Ovary (tissue), 10 donors: ENCODE measurements at regions of chrX and their contacts with region 1.

Region 1: GRCh38 chrX:104172121-104172520 is 5.9 kb downstream of the FAM199X start:
- DNase-seq: no peak
- H3K4me3 ChIP-seq: no peak overlapping the region
- H3K27ac ChIP-seq: no peak overlapping the region
- H3K4me1 ChIP-seq: peaks cover 1% of the 10 kb centered on the region
- H3K27me3 ChIP-seq: no peaks in the 10 kb centered on the region
- CTCF ChIP-seq: no peak
- EP300 ChIP-seq: no peak
- POLR2A ChIP-seq: no peak

Region 2: DNA sequence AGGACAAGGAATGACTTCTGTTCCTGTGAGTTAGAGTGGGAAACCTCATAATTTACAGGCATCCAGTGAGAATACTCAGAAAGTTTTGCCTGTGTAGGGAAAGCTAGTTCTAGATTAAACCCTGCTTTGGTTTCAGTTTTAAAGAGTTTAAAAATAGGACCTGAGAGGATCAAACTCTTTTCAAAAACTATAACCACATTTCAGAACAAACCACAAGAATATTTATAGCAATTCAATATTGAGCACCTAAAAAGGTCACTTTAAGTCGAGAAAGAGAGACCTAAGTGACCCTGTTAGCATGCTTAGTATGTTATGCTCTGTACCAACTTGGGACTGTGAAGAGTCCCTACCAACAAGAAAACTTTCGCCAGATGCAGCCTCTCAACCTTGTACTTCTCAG is 1978.6 kb after region 1 on chrX:
- intact Hi-C with region 1: loop called in 1 of 4 experiments (anchors 5 kb)
- DNase-seq: no peak
- H3K4me3 ChIP-seq: no peak overlapping the region
- H3K27ac ChIP-seq: no peak overlapping the region
- H3K4me1 ChIP-seq: no peaks in the 10 kb centered on the region
- H3K27me3 ChIP-seq: no peaks in the 10 kb centered on the region
- CTCF ChIP-seq: no peak
- EP300 ChIP-seq: no peak
- POLR2A ChIP-seq: no peak